ENCODE measurements at regions of chr1 and their contacts with region 1.

Region 1: GRCh38 chr1:202184750-202185460 is 8.7 kb upstream of the LGR6 start:
- DNase-seq: peak; percentile 96
- H3K4me3 Mint-ChIP-seq: no peak overlapping the region
- H3K27ac Mint-ChIP-seq: no peak overlapping the region
- H3K4me1 Mint-ChIP-seq: peaks cover 13% of the 10 kb centered on the region
- H3K27me3 Mint-ChIP-seq: peaks cover 50% of the 10 kb centered on the region
- CTCF ChIP-seq: peak; percentile 100

Region 2: GRCh38 chr1:202154766-202155477 is 30.0 kb before region 1 on chr1:
- CTCF ChIA-PET with region 1: interaction called, 13 read pairs
- POLR2A ChIA-PET with region 1: no interaction called
- intact Hi-C with region 1: no loop called
- DNase-seq: peak; percentile 92
- H3K4me3 Mint-ChIP-seq: no peak overlapping the region
- H3K27ac Mint-ChIP-seq: no peak overlapping the region
- H3K4me1 Mint-ChIP-seq: peaks cover 12% of the 10 kb centered on the region
- H3K27me3 Mint-ChIP-seq: no peaks in the 10 kb centered on the region
- CTCF ChIP-seq: peak; percentile 58

Region 3: DNA sequence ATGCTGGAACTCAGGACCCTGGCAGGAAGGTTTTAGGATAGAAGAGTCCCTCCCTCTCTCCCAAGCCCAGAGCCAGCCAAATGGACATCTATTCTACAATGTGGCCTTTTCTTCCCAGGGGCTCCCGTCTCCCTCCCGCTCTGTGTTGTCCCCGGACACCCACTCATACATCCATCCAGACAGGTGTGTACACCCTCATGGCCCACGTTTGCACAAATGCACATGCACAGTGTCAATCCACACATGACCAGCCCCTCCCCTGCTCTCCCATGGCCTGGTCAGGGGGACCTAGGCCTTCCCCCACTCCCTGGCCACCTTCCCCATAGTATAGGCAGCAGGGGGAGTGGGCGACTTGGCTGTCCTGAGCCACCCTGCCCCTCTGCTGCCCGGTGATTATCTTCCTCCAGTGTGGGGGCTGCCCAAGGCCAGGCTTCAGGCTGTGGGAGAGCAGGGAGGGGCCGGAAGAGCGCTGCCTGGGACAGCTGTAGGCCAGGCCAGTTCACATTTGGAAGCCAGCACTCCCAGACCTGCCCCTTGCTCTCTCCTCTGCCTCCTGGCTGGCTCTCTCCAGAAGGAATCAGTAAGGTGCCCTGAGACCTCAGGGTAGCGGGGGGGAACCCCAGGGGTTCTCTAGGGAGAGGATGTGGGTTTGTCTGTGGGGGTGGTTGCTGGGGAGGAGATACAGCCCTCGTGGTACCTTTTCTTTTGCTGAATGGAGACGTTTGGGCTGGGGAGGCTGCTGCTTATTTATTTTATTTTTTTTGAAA is 20.5 kb before region 1 on chr1:
- CTCF ChIA-PET with region 1: interaction called, 18 read pairs
- POLR2A ChIA-PET with region 1: no interaction called
- intact Hi-C with region 1: no loop called
- DNase-seq: no peak
- H3K4me3 Mint-ChIP-seq: no peak overlapping the region
- H3K27ac Mint-ChIP-seq: no peak overlapping the region
- H3K4me1 Mint-ChIP-seq: peaks cover 7% of the 10 kb centered on the region
- H3K27me3 Mint-ChIP-seq: peaks cover 11% of the 10 kb centered on the region
- CTCF ChIP-seq: no peak

Region 4: GRCh38 chr1:202221911-202222909 is 37.3 kb after region 1 on chr1:
- CTCF ChIA-PET with region 1: interaction called, 20 read pairs
- POLR2A ChIA-PET with region 1: interaction called, 4 read pairs
- intact Hi-C with region 1: no loop called
- DNase-seq: peak; percentile 90
- H3K4me3 Mint-ChIP-seq: no peak overlapping the region
- H3K27ac Mint-ChIP-seq: no peak overlapping the region
- H3K4me1 Mint-ChIP-seq: peaks cover 21% of the 10 kb centered on the region
- H3K27me3 Mint-ChIP-seq: peaks cover 23% of the 10 kb centered on the region
- CTCF ChIP-seq: no peak

Region 5: GRCh38 chr1:202304375-202304774 is 119.5 kb after region 1 on chr1:
- CTCF ChIA-PET with region 1: interaction called, 117 read pairs
- POLR2A ChIA-PET with region 1: no interaction called
- intact Hi-C with region 1: no loop called
- DNase-seq: no peak
- H3K4me3 Mint-ChIP-seq: no peak overlapping the region
- H3K27ac Mint-ChIP-seq: no peak overlapping the region
- H3K4me1 Mint-ChIP-seq: no peaks in the 10 kb centered on the region
- H3K27me3 Mint-ChIP-seq: no peaks in the 10 kb centered on the region
- CTCF ChIP-seq: no peak

Region 6: GRCh38 chr1:202348509-202349205 is 163.8 kb after region 1 on chr1 and contains the start of gene PPP1R12B:
- CTCF ChIA-PET with region 1: interaction called, 14 read pairs
- POLR2A ChIA-PET with region 1: no interaction called
- intact Hi-C with region 1: no loop called
- DNase-seq: peak; percentile 100
- H3K4me3 Mint-ChIP-seq: peak within 1 kb of the TSS; percentile 81
- H3K27ac Mint-ChIP-seq: peak within 1 kb of the TSS; percentile 78
- H3K4me1 Mint-ChIP-seq: peaks cover 33% of the 10 kb centered on the region
- H3K27me3 Mint-ChIP-seq: no peaks in the 10 kb centered on the region
- CTCF ChIP-seq: no peak
- total RNA-seq, gene PPP1R12B: 31.1 and 33.8 TPM in 2 replicates

Region 7: DNA sequence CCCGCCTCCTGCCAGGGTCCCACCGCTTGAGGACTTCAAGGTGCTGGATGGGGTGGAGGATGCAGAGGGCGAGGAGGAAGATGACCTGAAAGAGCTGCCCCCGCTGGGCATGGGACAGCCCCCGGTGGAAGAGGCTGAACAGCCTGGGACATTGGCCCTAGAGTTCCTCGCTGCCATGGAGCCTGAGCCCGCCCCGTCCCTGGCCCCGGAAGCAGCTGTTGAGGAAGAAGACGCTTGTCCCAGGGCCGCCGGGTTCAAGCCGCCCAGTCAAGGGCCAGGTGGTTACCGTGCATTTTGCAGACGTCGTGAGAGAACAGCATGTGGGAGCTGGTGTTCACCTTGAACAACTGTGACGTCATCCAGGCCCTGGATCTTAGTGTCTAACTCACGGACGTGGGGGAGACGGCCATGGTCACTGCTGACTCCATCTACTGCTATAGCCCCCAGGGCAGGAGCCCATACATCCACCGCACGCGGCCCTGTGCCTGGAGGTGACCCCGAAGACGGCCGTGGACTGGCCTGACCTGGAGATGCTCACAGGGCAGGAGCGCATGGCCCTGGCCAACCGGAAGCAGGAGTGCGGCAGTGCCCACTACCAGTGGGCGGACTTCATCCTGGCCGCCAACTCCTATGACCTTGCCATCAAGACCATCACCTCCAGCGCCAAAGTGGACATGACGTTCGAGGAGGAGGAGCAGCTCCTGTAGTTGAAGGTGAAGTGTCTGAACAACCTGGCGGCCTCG is 253.7 kb after region 1 on chr1:
- CTCF ChIA-PET with region 1: interaction called, 3 read pairs
- POLR2A ChIA-PET with region 1: no interaction called
- intact Hi-C with region 1: loop called (anchors 10 kb)
- DNase-seq: no peak
- H3K4me3 Mint-ChIP-seq: no peak overlapping the region
- H3K27ac Mint-ChIP-seq: no peak overlapping the region
- H3K4me1 Mint-ChIP-seq: no peaks in the 10 kb centered on the region
- H3K27me3 Mint-ChIP-seq: no peaks in the 10 kb centered on the region
- CTCF ChIP-seq: no peak

Measured in MCF 10A (cell line).